CD4-positive, alpha-beta memory T cell (primary cell): ENCODE measurements at regions of chr19 and their contacts with region 1.

Region 1: GRCh38 chr19:47225746-47226425 is 5.1 kb downstream of the BBC3 start:
- DNase-seq: peak; percentile 83 to 87 (median 84)
- H3K4me3 ChIP-seq: peak overlapping the region in 1 of 2 donors; percentile 52
- H3K4me3 Mint-ChIP-seq: peak overlapping the region; percentile 22 to 79 (median 64)
- H3K27ac ChIP-seq: peak overlapping the region; percentile 80
- H3K27ac Mint-ChIP-seq: peak overlapping the region; percentile 74 to 96 (median 89)
- H3K4me1 ChIP-seq: peaks cover 41% of the 10 kb centered on the region
- H3K4me1 Mint-ChIP-seq: peaks cover 5 to 20% (median 11%) of the 10 kb centered on the region in 4 donors
- H3K27me3 ChIP-seq: no peaks in the 10 kb centered on the region
- H3K27me3 Mint-ChIP-seq: no peaks in the 10 kb centered on the region

Region 2: DNA sequence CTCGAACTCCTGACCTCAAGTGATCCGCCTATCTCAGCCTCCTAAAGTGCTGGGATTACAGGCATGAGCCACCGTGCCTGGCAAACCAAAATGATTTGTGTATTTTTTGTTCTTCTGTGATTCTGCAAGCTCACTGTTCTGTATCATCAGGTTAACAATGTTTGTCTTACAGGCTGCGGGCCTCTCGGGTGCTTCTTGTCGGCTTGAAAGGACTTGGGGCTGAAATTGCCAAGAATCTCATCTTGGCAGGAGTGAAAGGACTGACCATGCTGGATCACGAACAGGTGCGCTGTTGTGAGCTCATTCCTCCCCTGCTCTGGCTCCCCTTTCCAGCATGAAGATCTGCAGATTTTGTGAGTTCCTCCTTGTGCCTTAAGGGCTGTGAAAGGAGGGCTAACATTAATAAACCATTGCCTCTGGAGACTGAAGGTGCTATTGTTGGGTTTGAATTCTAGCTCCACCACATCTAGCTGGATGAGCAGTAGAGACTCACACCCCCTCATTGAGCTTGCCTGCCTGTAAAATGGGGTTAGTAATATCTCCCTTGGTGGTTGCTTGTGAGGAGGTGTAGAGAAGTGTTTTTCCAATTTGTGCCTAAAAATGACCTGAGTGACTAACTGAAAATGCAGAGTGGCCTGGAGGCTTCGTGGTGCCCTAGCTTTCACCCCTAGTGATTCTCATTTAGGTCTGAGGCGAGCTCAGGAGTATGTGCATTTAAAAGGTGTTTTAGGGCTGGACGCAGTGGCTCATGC is 82.4 kb before region 1 on chr19:
- CTCF ChIA-PET with region 1: interaction called, 7 read pairs
- POLR2A ChIA-PET with region 1: interaction called, 15 read pairs
- intact Hi-C with region 1: no loop called
- DNase-seq: no peak
- H3K4me3 ChIP-seq: no peak overlapping the region
- H3K4me3 Mint-ChIP-seq: no peak overlapping the region
- H3K27ac ChIP-seq: no peak overlapping the region
- H3K27ac Mint-ChIP-seq: peak overlapping the region; percentile 30 to 87 (median 41)
- H3K4me1 ChIP-seq: peaks cover 37% of the 10 kb centered on the region
- H3K4me1 Mint-ChIP-seq: peaks cover 34 to 68% (median 48%) of the 10 kb centered on the region in 4 donors
- H3K27me3 ChIP-seq: no peaks in the 10 kb centered on the region
- H3K27me3 Mint-ChIP-seq: no peaks in the 10 kb centered on the region

Region 3: GRCh38 chr19:47152224-47153017 is 73.5 kb before region 1 on chr19:
- CTCF ChIA-PET with region 1: interaction called, 21 read pairs
- POLR2A ChIA-PET with region 1: interaction called, 64 read pairs
- intact Hi-C with region 1: loop called (anchors 5 kb)
- DNase-seq: no peak
- H3K4me3 ChIP-seq: no peak overlapping the region
- H3K4me3 Mint-ChIP-seq: no peak overlapping the region
- H3K27ac ChIP-seq: no peak overlapping the region
- H3K27ac Mint-ChIP-seq: no peak overlapping the region
- H3K4me1 ChIP-seq: peaks cover 47% of the 10 kb centered on the region
- H3K4me1 Mint-ChIP-seq: peaks cover 26 to 65% (median 43%) of the 10 kb centered on the region in 4 donors
- H3K27me3 ChIP-seq: no peaks in the 10 kb centered on the region
- H3K27me3 Mint-ChIP-seq: no peaks in the 10 kb centered on the region

Region 4: GRCh38 chr19:47157431-47158321 is 68.2 kb before region 1 on chr19:
- CTCF ChIA-PET with region 1: interaction called, 11 read pairs
- POLR2A ChIA-PET with region 1: interaction called, 64 read pairs
- intact Hi-C with region 1: loop called (anchors 5 kb)
- DNase-seq: peak; percentile 45 to 56 (median 53)
- H3K4me3 ChIP-seq: peak overlapping the region; percentile 17 to 40
- H3K4me3 Mint-ChIP-seq: peak overlapping the region; percentile 62 to 90 (median 84)
- H3K27ac ChIP-seq: peak overlapping the region; percentile 43
- H3K27ac Mint-ChIP-seq: peak overlapping the region; percentile 76 to 98 (median 95)
- H3K4me1 ChIP-seq: peaks cover 75% of the 10 kb centered on the region
- H3K4me1 Mint-ChIP-seq: peaks cover 40 to 74% (median 60%) of the 10 kb centered on the region in 4 donors
- H3K27me3 ChIP-seq: no peaks in the 10 kb centered on the region
- H3K27me3 Mint-ChIP-seq: no peaks in the 10 kb centered on the region

Region 5: GRCh38 chr19:47176627-47177090 is 49.2 kb before region 1 on chr19:
- CTCF ChIA-PET with region 1: interaction called, 6 read pairs
- POLR2A ChIA-PET with region 1: interaction called, 28 read pairs
- intact Hi-C with region 1: no loop called
- DNase-seq: peak; percentile 65 to 79 (median 70)
- H3K4me3 ChIP-seq: peak overlapping the region in 1 of 2 donors; percentile 26
- H3K4me3 Mint-ChIP-seq: peak overlapping the region; percentile 67 to 92 (median 78)
- H3K27ac ChIP-seq: peak overlapping the region; percentile 39
- H3K27ac Mint-ChIP-seq: peak overlapping the region; percentile 88 to 96 (median 91)
- H3K4me1 ChIP-seq: peaks cover 55% of the 10 kb centered on the region
- H3K4me1 Mint-ChIP-seq: peaks cover 42 to 75% (median 54%) of the 10 kb centered on the region in 4 donors
- H3K27me3 ChIP-seq: no peaks in the 10 kb centered on the region
- H3K27me3 Mint-ChIP-seq: no peaks in the 10 kb centered on the region

Region 6: DNA sequence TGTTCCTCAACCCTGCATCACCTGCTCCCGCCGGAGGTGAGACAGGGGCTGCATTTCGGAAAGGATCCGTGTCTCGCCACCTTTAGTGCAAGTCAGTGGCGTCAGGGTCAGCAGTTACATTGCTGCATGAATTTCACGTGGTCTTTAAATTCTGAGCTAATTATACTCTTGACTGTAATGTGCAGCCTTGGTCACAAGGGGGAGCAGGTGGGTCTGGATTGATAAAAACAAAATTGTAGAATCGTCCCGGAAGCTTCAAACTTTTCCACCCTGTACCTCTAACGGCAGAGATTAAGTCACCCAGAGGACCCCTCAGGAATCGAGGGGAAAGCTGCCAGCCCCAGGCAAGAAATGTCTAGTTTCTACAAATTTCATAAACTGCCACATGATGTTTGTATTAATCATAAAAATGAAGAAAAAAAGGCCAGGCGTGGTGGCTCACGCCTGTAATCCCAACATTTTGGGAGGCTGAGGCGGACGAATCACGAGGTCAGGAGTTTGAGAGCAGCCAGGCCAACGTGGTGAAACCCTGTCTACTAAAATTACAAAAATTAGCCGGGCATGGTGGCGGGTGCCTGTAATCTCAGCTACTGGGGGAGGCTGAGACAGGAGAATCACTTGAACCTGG is 15.1 kb before region 1 on chr19:
- CTCF ChIA-PET with region 1: interaction called, 81 read pairs
- POLR2A ChIA-PET with region 1: interaction called, 60 read pairs
- intact Hi-C with region 1: loop called (anchors 1 kb)
- DNase-seq: peak; percentile 68 to 83 (median 75)
- H3K4me3 ChIP-seq: no peak overlapping the region
- H3K4me3 Mint-ChIP-seq: peak overlapping the region in 2 of 8 donors; percentile 4 to 48
- H3K27ac ChIP-seq: no peak overlapping the region
- H3K27ac Mint-ChIP-seq: peak overlapping the region; percentile 15 to 89 (median 43)
- H3K4me1 ChIP-seq: peaks cover 12% of the 10 kb centered on the region
- H3K4me1 Mint-ChIP-seq: peaks cover 6 to 15% (median 7%) of the 10 kb centered on the region in 4 donors
- H3K27me3 ChIP-seq: no peaks in the 10 kb centered on the region
- H3K27me3 Mint-ChIP-seq: no peaks in the 10 kb centered on the region

Region 7: GRCh38 chr19:47256688-47257443 is 31.0 kb after region 1 on chr19:
- CTCF ChIA-PET with region 1: no interaction called
- POLR2A ChIA-PET with region 1: interaction called, 47 read pairs
- intact Hi-C with region 1: no loop called
- DNase-seq: peak; percentile 97 to 99 (median 98)
- H3K4me3 ChIP-seq: peak overlapping the region; percentile 61 to 62
- H3K4me3 Mint-ChIP-seq: peak overlapping the region; percentile 88 to 98 (median 94)
- H3K27ac ChIP-seq: peak overlapping the region; percentile 76
- H3K27ac Mint-ChIP-seq: peak overlapping the region; percentile 94 to 99 (median 99)
- H3K4me1 ChIP-seq: peaks cover 18% of the 10 kb centered on the region
- H3K4me1 Mint-ChIP-seq: peaks cover 20 to 44% (median 31%) of the 10 kb centered on the region in 4 donors
- H3K27me3 ChIP-seq: no peaks in the 10 kb centered on the region
- H3K27me3 Mint-ChIP-seq: no peaks in the 10 kb centered on the region

Region 8: GRCh38 chr19:47427241-47428176 is 201.6 kb after region 1 on chr19:
- CTCF ChIA-PET with region 1: no interaction called
- POLR2A ChIA-PET with region 1: no interaction called
- intact Hi-C with region 1: no loop called
- DNase-seq: peak; percentile 60 to 72 (median 67)
- H3K4me3 ChIP-seq: peak overlapping the region; percentile 21 to 27
- H3K4me3 Mint-ChIP-seq: peak overlapping the region in 3 of 8 donors; percentile 40 to 47 (median 45)
- H3K27ac ChIP-seq: no peak overlapping the region
- H3K27ac Mint-ChIP-seq: peak overlapping the region in 2 of 7 donors; percentile 43 to 58
- H3K4me1 ChIP-seq: peaks cover 26% of the 10 kb centered on the region
- H3K4me1 Mint-ChIP-seq: peaks cover 12 to 20% (median 16%) of the 10 kb centered on the region in 4 donors
- H3K27me3 ChIP-seq: peaks cover 32% of the 10 kb centered on the region
- H3K27me3 Mint-ChIP-seq: peaks cover 39 to 41% of the 10 kb centered on the region in 2 donors